Naive thymus-derived CD4-positive, alpha-beta T cell (primary cell): ENCODE measurements at regions of chrX and their contacts with region 1.

Region 1: GRCh38 chrX:154397819-154398724 is at the start of gene RPL10:
- DNase-seq: peak; percentile 67 to 90 (median 86)
- ATAC-seq: peak; percentile 90
- H3K4me3 ChIP-seq: peak within 1 kb of the TSS; percentile 95
- H3K4me3 Mint-ChIP-seq: peak within 1 kb of the TSS; percentile 93 to 100 (median 98)
- H3K27ac ChIP-seq: peak within 1 kb of the TSS; percentile 97
- H3K27ac Mint-ChIP-seq: peak within 1 kb of the TSS; percentile 97 to 100 (median 99)
- H3K4me1 ChIP-seq: peaks cover 10 to 14% of the 10 kb centered on the region in 2 donors
- H3K4me1 Mint-ChIP-seq: peaks cover 6 to 22% (median 14%) of the 10 kb centered on the region in 7 donors
- H3K27me3 ChIP-seq: no peaks in the 10 kb centered on the region
- H3K27me3 Mint-ChIP-seq: peaks cover 0 to 5% (median 0%) of the 10 kb centered on the region in 5 donors
- total RNA-seq, gene RPL10: 2,926 to 5,130 (median 5,063) TPM

Region 2: GRCh38 chrX:154327038-154327820 is 70.8 kb before region 1 on chrX:
- CTCF ChIA-PET with region 1: no interaction called
- POLR2A ChIA-PET with region 1: interaction called, 19 read pairs
- intact Hi-C with region 1: no loop called
- DNase-seq: peak in 7 of 9 donors; percentile 54 to 71 (median 64)
- ATAC-seq: peak; percentile 94
- H3K4me3 ChIP-seq: peak overlapping the region; percentile 42
- H3K4me3 Mint-ChIP-seq: peak overlapping the region; percentile 61 to 85 (median 79)
- H3K27ac ChIP-seq: peak overlapping the region; percentile 62
- H3K27ac Mint-ChIP-seq: peak overlapping the region; percentile 71 to 93 (median 90)
- H3K4me1 ChIP-seq: peaks cover 26 to 42% of the 10 kb centered on the region in 2 donors
- H3K4me1 Mint-ChIP-seq: peaks cover 16 to 63% (median 50%) of the 10 kb centered on the region in 7 donors
- H3K27me3 ChIP-seq: no peaks in the 10 kb centered on the region
- H3K27me3 Mint-ChIP-seq: no peaks in the 10 kb centered on the region

Region 3: DNA sequence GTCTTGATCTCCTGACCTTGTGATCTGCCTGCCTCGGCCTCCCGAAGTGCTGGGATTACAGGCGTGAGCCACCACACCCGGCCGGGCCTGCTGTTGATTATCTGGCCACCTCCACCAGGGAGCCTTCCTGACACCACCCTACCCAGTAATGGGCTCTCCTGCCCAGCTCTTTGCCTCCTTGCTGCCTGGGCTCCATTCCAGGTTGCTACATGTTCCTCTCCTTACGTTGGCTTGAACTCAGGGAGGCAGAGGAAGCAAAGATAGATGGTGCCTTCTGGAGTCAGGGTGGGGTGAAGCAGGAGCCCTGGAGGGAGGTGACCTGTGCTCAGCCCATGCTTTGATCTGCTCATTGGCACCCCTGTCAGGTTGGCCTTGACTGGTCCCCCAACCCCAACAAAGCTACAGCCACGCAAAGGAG is 49.9 kb before region 1 on chrX:
- CTCF ChIA-PET with region 1: no interaction called
- POLR2A ChIA-PET with region 1: no interaction called
- intact Hi-C with region 1: no loop called
- DNase-seq: no peak
- ATAC-seq: no peak
- H3K4me3 ChIP-seq: no peak overlapping the region
- H3K4me3 Mint-ChIP-seq: peak overlapping the region in 3 of 10 donors; percentile 16 to 73 (median 41)
- H3K27ac ChIP-seq: no peak overlapping the region
- H3K27ac Mint-ChIP-seq: peak overlapping the region in 7 of 9 donors; percentile 28 to 91 (median 62)
- H3K4me1 ChIP-seq: peaks cover 33 to 56% of the 10 kb centered on the region in 2 donors
- H3K4me1 Mint-ChIP-seq: peaks cover 12 to 39% (median 21%) of the 10 kb centered on the region in 7 donors
- H3K27me3 ChIP-seq: no peaks in the 10 kb centered on the region
- H3K27me3 Mint-ChIP-seq: no peaks in the 10 kb centered on the region

Region 4: DNA sequence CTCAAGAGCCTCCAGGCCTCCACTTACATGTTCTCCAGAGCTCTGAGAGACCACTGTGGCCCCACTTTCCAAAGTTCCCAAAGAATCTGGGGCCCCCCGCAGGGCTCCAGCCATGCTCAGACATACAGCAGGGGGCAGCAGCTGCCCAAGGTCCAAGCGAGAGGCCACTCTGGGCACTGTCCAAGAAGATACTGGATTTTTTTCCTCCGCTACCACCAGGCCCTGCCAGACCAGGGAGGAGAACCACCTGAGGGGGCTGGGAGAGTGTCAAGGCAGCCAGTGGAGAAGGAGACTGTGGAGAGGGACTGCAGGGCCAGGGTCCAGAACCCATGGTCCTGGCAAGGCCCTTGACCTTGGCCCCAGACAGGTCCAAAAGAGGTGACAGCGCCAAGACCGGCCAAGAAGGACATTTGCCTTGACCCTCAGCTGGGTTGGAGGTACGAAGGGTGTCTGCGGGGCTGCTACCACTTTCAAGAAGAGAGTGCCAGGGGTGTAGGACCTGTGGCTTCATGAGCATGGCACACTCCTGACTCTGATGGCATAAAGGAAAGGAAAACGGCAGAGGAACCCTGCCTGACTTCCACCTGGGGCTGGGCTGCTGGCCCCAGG is 13.7 kb before region 1 on chrX:
- CTCF ChIA-PET with region 1: no interaction called
- POLR2A ChIA-PET with region 1: interaction called, 12 read pairs
- intact Hi-C with region 1: no loop called
- DNase-seq: no peak
- ATAC-seq: no peak
- H3K4me3 ChIP-seq: no peak overlapping the region
- H3K4me3 Mint-ChIP-seq: no peak overlapping the region
- H3K27ac ChIP-seq: no peak overlapping the region
- H3K27ac Mint-ChIP-seq: peak overlapping the region in 3 of 9 donors; percentile 19 to 46 (median 41)
- H3K4me1 ChIP-seq: peaks cover 10% of the 10 kb centered on the region in 2 donors
- H3K4me1 Mint-ChIP-seq: peaks cover 3 to 14% (median 12%) of the 10 kb centered on the region in 7 donors
- H3K27me3 ChIP-seq: no peaks in the 10 kb centered on the region
- H3K27me3 Mint-ChIP-seq: no peaks in the 10 kb centered on the region

Region 5: DNA sequence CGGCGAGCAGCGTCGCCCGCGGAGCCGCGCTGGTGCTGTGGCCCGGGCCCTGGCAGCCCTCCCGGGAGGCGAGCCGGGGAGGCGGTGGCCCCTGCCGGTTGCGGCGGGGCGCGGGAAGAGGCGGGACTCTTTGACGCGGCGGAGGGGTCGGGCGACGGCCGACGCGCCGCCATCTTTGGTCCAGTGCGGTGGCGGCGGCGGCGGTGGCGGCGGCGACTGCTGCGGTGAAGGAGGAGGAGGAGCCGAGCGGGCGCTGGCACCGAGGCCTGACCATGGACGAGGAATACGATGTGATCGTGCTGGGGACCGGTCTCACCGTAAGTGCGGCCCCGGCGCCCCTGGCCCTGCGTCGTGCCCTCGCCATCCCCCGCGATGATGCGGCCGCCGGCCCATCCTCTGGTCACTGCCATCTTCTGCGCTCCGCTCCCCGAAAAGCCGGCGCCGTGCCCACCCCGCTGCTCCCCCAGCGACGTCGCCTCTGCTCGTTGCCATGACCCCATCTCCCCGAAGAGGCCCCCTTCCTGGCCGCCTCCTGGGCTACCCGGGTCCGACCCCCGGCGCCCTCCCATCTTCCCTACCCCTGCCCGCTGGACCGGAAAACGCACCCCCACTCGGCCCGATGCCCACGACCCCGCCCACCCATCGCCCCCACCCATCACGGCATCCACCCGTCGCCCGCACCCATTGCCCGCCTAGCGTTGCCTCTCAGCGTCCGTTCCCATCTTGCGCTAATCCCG is 39.1 kb after region 1 on chrX and contains the start of gene GDI1:
- CTCF ChIA-PET with region 1: no interaction called
- POLR2A ChIA-PET with region 1: interaction called, 17 read pairs
- intact Hi-C with region 1: loop called in 1 of 2 experiments (anchors 5 kb)
- DNase-seq: peak; percentile 39 to 72 (median 62)
- ATAC-seq: peak; percentile 82
- H3K4me3 ChIP-seq: peak within 1 kb of the TSS; percentile 48
- H3K4me3 Mint-ChIP-seq: peak within 1 kb of the TSS; percentile 75 to 90 (median 86)
- H3K27ac ChIP-seq: peak within 1 kb of the TSS; percentile 85
- H3K27ac Mint-ChIP-seq: peak within 1 kb of the TSS; percentile 82 to 97 (median 91)
- H3K4me1 ChIP-seq: no peaks in the 10 kb centered on the region
- H3K4me1 Mint-ChIP-seq: peaks cover 0 to 36% (median 17%) of the 10 kb centered on the region in 7 donors
- H3K27me3 ChIP-seq: no peaks in the 10 kb centered on the region
- H3K27me3 Mint-ChIP-seq: no peaks in the 10 kb centered on the region
- total RNA-seq, gene GDI1: 106 to 174 (median 140) TPM

Region 6: DNA sequence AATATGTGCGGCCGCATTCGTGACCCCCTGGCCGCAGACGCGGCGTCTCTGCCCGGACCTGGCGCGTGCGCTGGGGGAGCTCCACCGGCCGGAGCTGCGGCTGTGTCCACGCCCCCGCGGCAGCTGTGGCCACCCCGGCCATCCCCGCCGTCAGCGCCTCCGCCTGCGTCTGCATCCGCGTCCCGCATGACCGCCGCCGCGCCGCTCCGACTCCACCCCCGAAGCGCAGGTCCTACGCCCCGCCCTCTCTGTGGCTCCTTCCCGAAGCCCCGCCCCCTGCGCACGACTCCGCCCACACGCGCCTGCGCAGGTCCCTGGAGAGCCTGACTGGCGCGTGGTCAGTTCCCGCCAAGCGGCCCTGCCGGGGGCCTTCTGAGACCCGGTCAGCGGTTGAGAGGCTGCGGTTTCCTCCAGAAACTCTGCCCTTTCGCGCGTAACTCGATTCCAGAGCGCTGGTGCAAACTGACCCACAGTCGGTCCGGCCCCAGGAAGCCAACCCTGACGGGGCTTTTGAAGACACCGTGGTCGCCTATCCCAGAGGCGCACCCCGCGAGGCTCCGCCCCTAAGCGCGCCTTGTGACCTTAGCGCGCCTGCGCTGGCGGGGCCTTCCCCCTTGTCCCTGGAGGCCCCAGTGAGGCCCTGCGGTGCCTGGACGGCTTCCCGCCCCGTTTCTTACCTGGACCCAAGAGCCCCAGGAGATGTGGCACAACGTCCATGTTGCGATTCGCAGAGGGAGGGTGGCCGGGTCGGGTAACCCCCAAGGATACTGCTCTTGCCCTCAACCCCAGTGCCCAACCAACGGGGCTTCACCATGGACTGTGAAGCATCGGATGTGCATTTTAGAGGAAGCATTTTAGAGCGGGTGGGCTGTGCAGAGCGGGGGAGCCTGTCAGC is 80.9 kb after region 1 on chrX and contains the start of gene LAGE3:
- CTCF ChIA-PET with region 1: no interaction called
- POLR2A ChIA-PET with region 1: interaction called, 5 read pairs
- intact Hi-C with region 1: loop called in 1 of 2 experiments (anchors 5 kb)
- DNase-seq: peak; percentile 85 to 97 (median 94)
- ATAC-seq: peak; percentile 97
- H3K4me3 ChIP-seq: peak within 1 kb of the TSS; percentile 79
- H3K4me3 Mint-ChIP-seq: peak within 1 kb of the TSS; percentile 81 to 94 (median 82)
- H3K27ac ChIP-seq: peak within 1 kb of the TSS; percentile 90
- H3K27ac Mint-ChIP-seq: peak within 1 kb of the TSS; percentile 59 to 92 (median 88)
- H3K4me1 ChIP-seq: peaks cover 4 to 14% of the 10 kb centered on the region in 2 donors
- H3K4me1 Mint-ChIP-seq: peaks cover 12 to 44% (median 23%) of the 10 kb centered on the region in 7 donors
- H3K27me3 ChIP-seq: no peaks in the 10 kb centered on the region
- H3K27me3 Mint-ChIP-seq: no peaks in the 10 kb centered on the region
- total RNA-seq, gene LAGE3: 11.6 to 57.0 (median 20.4) TPM

Region 7: DNA sequence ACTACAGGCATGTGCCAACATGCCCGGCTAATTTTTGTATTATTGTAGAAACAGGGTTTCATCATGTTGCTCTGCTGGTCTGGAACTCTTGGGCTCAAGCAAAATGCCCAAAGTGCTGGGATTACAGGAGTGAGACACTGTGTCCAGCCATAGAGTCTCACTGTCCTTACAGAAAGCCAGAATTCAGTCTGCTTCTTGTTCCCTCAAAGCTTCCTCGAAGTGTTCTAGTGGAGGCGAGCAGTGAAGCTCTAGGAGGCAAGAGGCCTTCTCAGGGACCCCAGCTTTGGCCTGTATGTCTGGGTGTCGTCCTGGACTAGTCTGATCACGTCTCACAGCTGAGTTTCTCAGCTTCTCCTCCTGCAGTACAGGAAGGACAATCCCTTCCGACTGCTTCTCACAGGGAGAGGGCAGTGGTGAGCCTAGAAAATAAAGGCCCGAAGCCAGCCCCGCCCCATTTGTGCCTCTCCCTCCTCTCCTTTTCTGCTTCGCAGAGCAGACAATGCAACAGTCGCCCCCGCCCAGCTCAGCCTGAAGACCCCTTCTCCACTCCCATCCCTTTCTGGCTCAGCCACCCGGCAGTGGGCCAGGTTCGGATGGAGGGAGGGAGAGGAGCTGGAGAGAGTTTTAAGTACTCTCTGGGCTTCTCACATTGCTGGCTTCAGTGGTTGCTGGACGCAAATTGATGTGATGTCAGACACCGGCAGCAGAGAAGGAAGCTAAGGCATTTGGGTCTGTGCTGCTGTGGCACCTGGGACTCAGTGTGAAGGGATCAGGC is 129.0 kb after region 1 on chrX:
- CTCF ChIA-PET with region 1: no interaction called
- POLR2A ChIA-PET with region 1: interaction called, 13 read pairs
- intact Hi-C with region 1: loop called in 1 of 2 experiments (anchors 5 kb)
- DNase-seq: peak in 8 of 9 donors; percentile 29 to 55 (median 46)
- ATAC-seq: peak; percentile 93
- H3K4me3 ChIP-seq: no peak overlapping the region
- H3K4me3 Mint-ChIP-seq: peak overlapping the region in 8 of 10 donors; percentile 28 to 72 (median 43)
- H3K27ac ChIP-seq: peak overlapping the region; percentile 50
- H3K27ac Mint-ChIP-seq: peak overlapping the region; percentile 38 to 85 (median 80)
- H3K4me1 ChIP-seq: peaks cover 5 to 23% of the 10 kb centered on the region in 2 donors
- H3K4me1 Mint-ChIP-seq: peaks cover 7 to 28% (median 20%) of the 10 kb centered on the region in 7 donors
- H3K27me3 ChIP-seq: no peaks in the 10 kb centered on the region
- H3K27me3 Mint-ChIP-seq: no peaks in the 10 kb centered on the region